Heart left ventricle (tissue), 16 donors: ENCODE measurements at regions of chr7 and their contacts with region 1.

Region 1: GRCh38 chr7:80918909-80919662 is at the start of gene SEMA3C:
- DNase-seq: peak; percentile 86 to 95 (median 92)
- ATAC-seq: peak; percentile 93 to 99 (median 96)
- H3K4me3 ChIP-seq: peak within 1 kb of the TSS; percentile 38 to 80 (median 66)
- H3K27ac ChIP-seq: peak within 1 kb of the TSS in 11 of 12 donors; percentile 72 to 85 (median 76)
- H3K4me1 ChIP-seq: peaks cover 0 to 20% (median 4%) of the 10 kb centered on the region in 12 donors
- H3K27me3 ChIP-seq: peaks cover 0 to 4% (median 0%) of the 10 kb centered on the region in 9 donors
- CTCF ChIP-seq: peak in 2 of 12 donors; percentile 12 to 16
- POLR2A ChIP-seq: peak in 1 of 2 donors; percentile 50
- total RNA-seq, gene SEMA3C: 40.2 to 110 (median 67.7) TPM

Region 2: DNA sequence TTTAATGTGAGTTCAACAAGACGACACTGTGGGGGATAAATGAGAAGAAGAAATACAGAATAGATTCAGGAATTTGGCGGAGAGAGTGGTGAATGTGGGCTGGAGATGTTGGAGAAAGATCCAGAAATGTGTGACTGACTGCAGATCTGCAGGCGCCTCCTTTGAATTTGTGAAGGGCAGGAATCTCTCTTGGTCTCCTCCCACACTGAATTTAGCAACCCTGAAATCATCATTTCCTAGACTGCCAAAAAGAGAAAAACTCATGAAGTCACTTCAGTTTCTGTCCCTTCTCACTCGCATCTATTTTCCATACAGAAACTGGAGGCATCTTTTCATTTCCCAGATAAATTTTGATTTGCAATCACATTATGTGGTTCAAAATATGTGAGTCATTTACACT is 655.8 kb before region 1 on chr7:
- intact Hi-C with region 1: no loop called
- DNase-seq: no peak
- ATAC-seq: peak in 2 of 4 donors; percentile 34 to 37
- H3K4me3 ChIP-seq: peak overlapping the region in 1 of 12 donors; percentile 30
- H3K27ac ChIP-seq: no peak overlapping the region
- H3K4me1 ChIP-seq: no peaks in the 10 kb centered on the region
- H3K27me3 ChIP-seq: no peaks in the 10 kb centered on the region
- CTCF ChIP-seq: no peak
- POLR2A ChIP-seq: no peak

Region 3: GRCh38 chr7:80611775-80612174 is 307.3 kb before region 1 on chr7:
- intact Hi-C with region 1: no loop called
- DNase-seq: peak; percentile 67 to 83 (median 74)
- ATAC-seq: peak; percentile 75 to 84 (median 80)
- H3K4me3 ChIP-seq: peak overlapping the region in 3 of 12 donors; percentile 2 to 25 (median 24)
- H3K27ac ChIP-seq: peak overlapping the region; percentile 54 to 83 (median 77)
- H3K4me1 ChIP-seq: peaks cover 6 to 93% (median 50%) of the 10 kb centered on the region in 12 donors
- H3K27me3 ChIP-seq: no peaks in the 10 kb centered on the region
- CTCF ChIP-seq: no peak
- POLR2A ChIP-seq: no peak

Region 4: DNA sequence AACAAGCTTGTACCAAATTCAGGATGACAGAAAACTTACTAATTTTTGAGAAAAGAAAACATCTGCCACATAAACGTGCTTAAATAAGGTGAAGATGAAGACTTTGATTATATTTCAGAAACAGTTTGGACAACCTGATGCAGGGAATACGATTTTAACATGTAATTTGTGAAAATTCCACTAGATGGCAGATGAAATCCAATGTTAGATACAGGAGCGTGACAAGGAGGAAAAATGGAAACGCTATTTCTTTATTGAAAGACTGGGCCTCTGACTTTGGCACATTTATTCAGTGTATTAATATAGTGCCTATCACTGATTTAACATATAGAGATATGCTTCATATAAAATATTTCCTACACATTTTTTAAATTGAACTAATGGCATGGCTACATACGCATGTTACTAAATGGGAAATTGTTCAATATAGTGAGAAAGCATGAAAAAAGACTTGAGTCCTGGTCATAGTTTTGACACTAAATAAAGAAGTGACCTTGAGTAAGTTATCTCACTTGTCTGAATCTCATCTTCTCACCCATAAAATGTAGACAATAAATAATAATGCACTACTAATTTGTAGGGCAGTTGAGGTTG is 219.9 kb before region 1 on chr7:
- intact Hi-C with region 1: loop called (anchors 5 to 10 kb)
- DNase-seq: no peak
- ATAC-seq: peak in 3 of 4 donors; percentile 48 to 75 (median 69)
- H3K4me3 ChIP-seq: no peak overlapping the region
- H3K27ac ChIP-seq: peak overlapping the region in 1 of 12 donors; percentile 3
- H3K4me1 ChIP-seq: peaks cover 0 to 12% (median 4%) of the 10 kb centered on the region in 12 donors
- H3K27me3 ChIP-seq: no peaks in the 10 kb centered on the region
- CTCF ChIP-seq: peak; percentile 58 to 80 (median 72)
- POLR2A ChIP-seq: no peak

Region 5: GRCh38 chr7:80781561-80781979 is 137.5 kb before region 1 on chr7:
- intact Hi-C with region 1: loop called in 3 of 10 experiments (anchors 5 to 10 kb)
- DNase-seq: peak in 4 of 5 donors; percentile 44 to 69 (median 52)
- ATAC-seq: peak; percentile 84 to 90 (median 86)
- H3K4me3 ChIP-seq: no peak overlapping the region
- H3K27ac ChIP-seq: peak overlapping the region; percentile 7 to 86 (median 59)
- H3K4me1 ChIP-seq: peaks cover 0 to 42% (median 11%) of the 10 kb centered on the region in 12 donors
- H3K27me3 ChIP-seq: no peaks in the 10 kb centered on the region
- CTCF ChIP-seq: no peak
- POLR2A ChIP-seq: no peak

Region 6: DNA sequence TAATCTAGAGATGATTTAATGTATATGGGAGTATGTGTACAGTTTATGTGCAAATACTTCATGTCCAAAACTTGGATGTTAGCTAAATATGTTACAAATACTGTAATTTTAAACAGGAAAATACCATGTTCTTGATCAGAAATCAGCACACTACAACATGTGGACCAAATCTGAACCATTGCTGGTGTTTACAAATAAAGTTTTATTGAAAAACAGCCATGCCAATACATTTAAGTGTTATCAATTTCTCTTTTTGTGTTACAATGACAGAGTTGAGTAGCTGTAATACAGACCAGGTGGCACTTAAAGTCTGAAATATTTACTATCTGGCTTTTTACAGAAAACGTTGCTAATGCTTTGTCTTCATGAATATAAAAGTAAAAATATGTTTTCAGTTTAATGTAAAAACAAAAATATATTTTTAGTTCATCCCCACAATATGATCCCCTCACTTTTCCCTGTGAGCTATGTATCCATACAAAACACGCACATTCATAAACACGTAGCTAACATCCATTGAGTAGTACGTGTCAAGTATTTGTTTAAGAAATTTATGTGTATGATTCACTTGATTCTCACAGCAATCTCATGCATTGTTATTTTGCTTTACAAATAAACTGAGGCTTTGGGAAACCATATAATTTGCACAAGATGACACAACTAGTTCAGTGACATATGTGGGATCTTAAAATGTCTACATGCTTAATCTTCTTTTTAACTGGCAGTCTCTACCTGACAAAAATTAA is 329.2 kb after region 1 on chr7:
- intact Hi-C with region 1: loop called in 4 of 10 experiments (anchors 5 to 10 kb)
- DNase-seq: no peak
- ATAC-seq: no peak
- H3K4me3 ChIP-seq: no peak overlapping the region
- H3K27ac ChIP-seq: no peak overlapping the region
- H3K4me1 ChIP-seq: no peaks in the 10 kb centered on the region
- H3K27me3 ChIP-seq: no peaks in the 10 kb centered on the region
- CTCF ChIP-seq: no peak
- POLR2A ChIP-seq: no peak

Region 7: GRCh38 chr7:81321949-81322348 is 402.9 kb after region 1 on chr7:
- intact Hi-C with region 1: no loop called
- DNase-seq: no peak
- ATAC-seq: no peak
- H3K4me3 ChIP-seq: no peak overlapping the region
- H3K27ac ChIP-seq: no peak overlapping the region
- H3K4me1 ChIP-seq: no peaks in the 10 kb centered on the region
- H3K27me3 ChIP-seq: no peaks in the 10 kb centered on the region
- CTCF ChIP-seq: no peak
- POLR2A ChIP-seq: no peak

Region 8: GRCh38 chr7:81447351-81447952 is 528.4 kb after region 1 on chr7:
- intact Hi-C with region 1: loop called in 7 of 10 experiments (anchors 2 to 10 kb)
- DNase-seq: no peak
- ATAC-seq: peak in 1 of 4 donors; percentile 53
- H3K4me3 ChIP-seq: no peak overlapping the region
- H3K27ac ChIP-seq: no peak overlapping the region
- H3K4me1 ChIP-seq: no peaks in the 10 kb centered on the region
- H3K27me3 ChIP-seq: no peaks in the 10 kb centered on the region
- CTCF ChIP-seq: peak in 7 of 12 donors; percentile 7 to 37 (median 29)
- POLR2A ChIP-seq: no peak

Region 9: DNA sequence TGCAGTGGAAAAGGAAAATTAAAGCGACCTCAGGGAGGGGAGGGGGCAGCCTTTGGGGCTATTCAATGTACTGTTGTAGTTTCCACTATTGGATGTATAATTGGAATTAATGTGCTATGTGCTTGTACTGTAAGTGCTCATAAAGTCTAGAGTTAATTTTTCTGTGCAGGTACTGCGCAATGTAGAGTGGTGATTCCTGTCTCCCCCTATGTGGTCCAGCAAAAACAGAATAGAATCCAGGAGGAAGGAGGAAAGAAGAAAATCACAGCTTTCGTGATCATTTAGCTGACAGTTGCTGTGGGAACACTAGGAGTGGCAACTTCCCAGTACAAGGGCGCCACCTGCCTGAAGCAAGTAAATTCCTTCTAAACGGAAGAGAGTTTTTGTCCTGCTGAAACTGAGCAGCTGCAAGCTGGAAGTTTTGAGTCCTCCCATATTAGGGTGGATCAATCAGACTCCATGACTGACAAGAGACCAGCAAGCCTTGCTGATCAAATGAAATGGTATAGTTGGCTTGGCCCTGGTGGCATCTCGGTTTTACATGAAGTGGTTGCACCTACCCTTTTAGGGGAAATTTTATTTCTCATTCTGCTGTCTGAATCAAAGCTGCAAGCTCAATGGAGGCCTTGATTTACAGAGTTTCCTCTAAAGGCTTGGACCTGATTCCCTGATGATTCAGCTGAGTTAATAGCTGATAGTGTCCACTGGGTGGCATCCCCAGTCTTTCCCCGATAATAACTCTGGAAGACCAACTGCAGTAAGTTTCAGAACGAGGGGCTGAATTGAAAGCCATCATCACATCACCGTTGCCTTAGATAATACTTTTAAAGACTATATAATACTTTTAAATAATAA is 551.0 kb after region 1 on chr7:
- intact Hi-C with region 1: loop called in 2 of 10 experiments (anchors 5 to 10 kb)
- DNase-seq: peak; percentile 63 to 76 (median 68)
- ATAC-seq: peak; percentile 75 to 92 (median 86)
- H3K4me3 ChIP-seq: peak overlapping the region in 3 of 12 donors; percentile 9 to 29 (median 9)
- H3K27ac ChIP-seq: peak overlapping the region in 2 of 12 donors; percentile 5 to 18
- H3K4me1 ChIP-seq: peaks cover 0 to 14% (median 0%) of the 10 kb centered on the region in 12 donors
- H3K27me3 ChIP-seq: no peaks in the 10 kb centered on the region
- CTCF ChIP-seq: peak; percentile 40 to 76 (median 64)
- POLR2A ChIP-seq: no peak